ENCODE measurements at regions of chr3 and their contacts with region 1.

Region 1: GRCh38 chr3:45656575-45657363 is 32.4 kb upstream of the SACM1L start:
- DNase-seq: peak; percentile 93
- H3K4me3 ChIP-seq: no peak overlapping the region
- H3K27ac ChIP-seq: no peak overlapping the region
- H3K4me1 ChIP-seq: no peaks in the 10 kb centered on the region
- H3K27me3 ChIP-seq: no peaks in the 10 kb centered on the region
- CTCF ChIP-seq: peak; percentile 88 to 98 (median 96)
- POLR2A ChIP-seq: no peak

Region 2: DNA sequence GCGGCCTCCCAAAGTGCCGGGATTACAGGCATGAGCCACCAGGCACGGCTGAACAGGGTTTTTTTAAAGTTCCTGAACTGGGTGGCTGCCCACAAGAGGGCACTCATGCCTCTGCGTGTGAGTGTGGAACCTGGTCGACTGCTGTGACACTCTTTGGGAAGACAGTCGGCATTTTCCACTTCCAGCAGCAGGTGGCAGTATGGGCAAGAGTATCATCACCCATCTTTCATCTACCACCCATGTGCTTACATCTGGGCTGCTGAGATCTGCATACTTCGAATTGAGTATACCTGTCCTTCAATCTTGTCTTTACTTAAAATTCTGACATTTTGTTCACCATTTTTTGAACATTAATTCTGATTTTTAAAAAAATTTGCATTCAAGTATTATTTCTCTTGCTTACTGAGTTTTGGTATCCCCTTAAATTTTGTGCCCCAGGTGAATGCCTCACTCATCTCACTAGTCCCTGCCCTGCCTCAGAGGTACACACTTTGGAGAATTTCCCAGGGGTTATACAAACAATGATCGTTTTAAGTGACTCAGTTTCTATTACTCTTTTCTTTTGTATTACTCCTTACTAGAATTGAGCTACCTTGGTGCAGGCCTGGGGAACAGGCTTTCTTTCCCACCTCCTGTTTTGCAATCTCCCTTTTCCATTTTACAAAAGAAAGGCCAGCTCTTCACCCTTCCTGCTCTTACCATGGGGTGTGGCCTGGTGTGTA is 618.9 kb before region 1 on chr3:
- intact Hi-C with region 1: loop called (anchors 5 kb)
- DNase-seq: peak; percentile 94
- H3K4me3 ChIP-seq: no peak overlapping the region
- H3K27ac ChIP-seq: no peak overlapping the region
- H3K4me1 ChIP-seq: no peaks in the 10 kb centered on the region
- H3K27me3 ChIP-seq: no peaks in the 10 kb centered on the region
- CTCF ChIP-seq: peak; percentile 82 to 99 (median 96)
- POLR2A ChIP-seq: no peak

Region 3: GRCh38 chr3:45224824-45225464 is 431.8 kb before region 1 on chr3:
- intact Hi-C with region 1: loop called (anchors 10 kb)
- DNase-seq: peak; percentile 72
- H3K4me3 ChIP-seq: peak overlapping the region; percentile 41 to 54
- H3K27ac ChIP-seq: peak overlapping the region in 1 of 2 donors; percentile 41
- H3K4me1 ChIP-seq: no peaks in the 10 kb centered on the region
- H3K27me3 ChIP-seq: no peaks in the 10 kb centered on the region
- CTCF ChIP-seq: peak; percentile 26 to 75 (median 55)
- POLR2A ChIP-seq: no peak

Region 4: DNA sequence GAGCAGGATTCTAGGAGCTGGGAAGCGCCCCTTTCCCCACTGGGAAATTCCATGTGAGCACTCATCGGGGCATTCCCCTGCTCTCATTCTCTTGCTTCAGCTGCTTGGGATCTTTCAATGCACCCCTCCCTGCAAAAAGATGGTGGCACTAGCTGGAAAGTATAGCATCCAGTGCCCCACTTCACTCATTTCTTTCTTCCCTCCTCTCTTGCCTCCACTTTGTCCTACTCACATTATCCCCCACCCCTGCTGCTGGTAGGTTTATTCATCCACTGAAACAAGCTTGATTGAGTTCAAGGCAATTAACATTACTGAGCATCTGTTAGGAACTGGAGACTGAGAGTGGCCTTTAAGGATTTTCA is 147.0 kb before region 1 on chr3:
- intact Hi-C with region 1: loop called (anchors 2 kb)
- DNase-seq: no peak
- H3K4me3 ChIP-seq: no peak overlapping the region
- H3K27ac ChIP-seq: no peak overlapping the region
- H3K4me1 ChIP-seq: no peaks in the 10 kb centered on the region
- H3K27me3 ChIP-seq: no peaks in the 10 kb centered on the region
- CTCF ChIP-seq: no peak
- POLR2A ChIP-seq: no peak

Region 5: DNA sequence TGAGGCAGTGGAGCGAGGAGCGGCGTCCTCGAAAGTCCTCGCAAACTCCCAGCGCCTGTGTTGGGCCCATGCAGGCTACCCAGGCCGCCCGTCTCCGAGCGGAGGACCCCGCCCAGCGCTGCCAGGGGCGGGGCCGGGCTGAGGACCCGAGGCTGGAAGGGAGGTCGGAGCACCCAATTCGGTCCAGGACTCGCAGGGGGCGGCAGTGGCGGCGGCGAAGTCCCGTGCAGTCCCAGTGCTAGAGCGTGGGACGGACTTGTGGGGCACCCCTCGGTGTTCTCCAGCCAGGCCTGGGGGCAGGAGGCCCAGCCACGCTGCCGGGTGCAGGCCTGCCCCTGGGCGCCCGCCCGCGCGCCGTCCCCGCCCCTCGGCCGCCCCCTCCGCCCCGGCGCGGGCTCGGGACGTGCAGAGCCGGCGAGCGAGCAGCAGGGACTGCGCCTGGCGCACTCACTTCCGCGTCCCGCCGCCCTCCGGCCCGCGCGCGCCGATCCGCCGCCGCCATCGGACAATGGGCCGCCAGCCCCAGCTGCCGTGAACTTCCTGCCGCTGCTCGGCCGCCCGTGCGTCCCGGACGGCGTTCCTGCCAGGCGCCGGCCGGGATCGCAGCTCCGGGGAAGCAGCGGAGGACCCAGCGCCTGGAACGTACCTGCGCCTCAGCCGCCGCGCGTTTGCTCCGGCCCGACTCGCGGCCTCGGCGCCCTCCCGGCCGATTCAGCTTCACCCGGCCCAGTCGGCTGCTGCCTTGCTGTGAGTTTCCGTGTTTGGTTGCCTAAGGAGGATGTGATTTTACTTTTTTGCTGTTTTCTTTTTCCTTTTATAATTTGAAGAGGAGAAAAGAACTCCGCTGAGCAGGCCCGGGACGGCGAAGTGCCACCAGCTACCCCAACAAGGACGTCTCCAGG is 62.8 kb before region 1 on chr3:
- intact Hi-C with region 1: loop called (anchors 1 kb)
- DNase-seq: peak; percentile 69
- H3K4me3 ChIP-seq: peak overlapping the region; percentile 61 to 73
- H3K27ac ChIP-seq: peak overlapping the region; percentile 83 to 88
- H3K4me1 ChIP-seq: peaks cover 23% of the 10 kb centered on the region
- H3K27me3 ChIP-seq: no peaks in the 10 kb centered on the region
- CTCF ChIP-seq: no peak
- POLR2A ChIP-seq: peak; percentile 66

Measured in prostate gland (tissue), 2 donors.